MCF 10A (cell line): ENCODE measurements at regions of chr20 and their contacts with region 1.

Region 1: DNA sequence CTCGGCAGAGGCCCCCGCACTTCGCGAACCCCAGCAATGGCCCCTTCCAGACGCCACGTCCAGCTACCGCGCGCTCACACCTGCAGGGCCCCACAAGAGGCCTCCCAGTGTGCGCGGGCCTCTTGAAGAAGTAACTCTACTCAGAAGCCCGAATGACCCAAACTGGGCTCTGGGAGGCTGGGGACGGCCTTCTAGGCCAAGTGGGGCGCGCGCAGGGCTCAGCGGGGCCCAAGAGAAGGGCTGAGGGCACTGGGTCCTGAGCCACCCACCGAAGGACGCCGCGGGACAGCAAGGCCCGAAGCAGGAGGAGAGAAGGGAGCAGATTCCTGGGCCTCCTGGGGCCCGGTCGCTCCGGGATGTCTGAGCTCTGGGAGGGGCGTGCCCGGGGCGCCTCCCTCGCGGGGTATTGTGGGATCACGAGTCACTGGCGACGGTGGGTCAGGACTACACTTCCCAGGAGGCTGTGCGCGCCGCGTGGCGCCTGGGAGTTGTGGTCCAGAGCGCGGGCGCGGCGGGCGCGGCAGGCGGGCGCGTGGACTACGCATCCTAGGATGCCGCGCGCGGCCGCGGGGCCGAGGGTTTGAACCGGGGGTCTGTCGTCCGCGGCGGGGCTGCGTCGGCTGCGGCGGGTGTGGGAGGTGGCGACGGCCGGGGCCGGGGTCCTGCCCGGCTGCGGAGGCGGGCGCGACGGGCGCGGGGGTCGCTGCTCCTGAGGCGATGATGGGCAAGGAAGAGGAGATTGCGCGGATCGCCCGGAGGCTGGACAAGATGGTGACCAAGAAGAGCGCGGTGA is at the start of gene TCEA2:
- DNase-seq: peak; percentile 95
- H3K4me3 Mint-ChIP-seq: peak within 1 kb of the TSS; percentile 88
- H3K27ac Mint-ChIP-seq: peak within 1 kb of the TSS; percentile 89
- H3K4me1 Mint-ChIP-seq: peaks cover 41% of the 10 kb centered on the region
- H3K27me3 Mint-ChIP-seq: no peaks in the 10 kb centered on the region
- CTCF ChIP-seq: no peak
- total RNA-seq, gene TCEA2: 30.8 and 39.7 TPM in 2 replicates

Region 2: DNA sequence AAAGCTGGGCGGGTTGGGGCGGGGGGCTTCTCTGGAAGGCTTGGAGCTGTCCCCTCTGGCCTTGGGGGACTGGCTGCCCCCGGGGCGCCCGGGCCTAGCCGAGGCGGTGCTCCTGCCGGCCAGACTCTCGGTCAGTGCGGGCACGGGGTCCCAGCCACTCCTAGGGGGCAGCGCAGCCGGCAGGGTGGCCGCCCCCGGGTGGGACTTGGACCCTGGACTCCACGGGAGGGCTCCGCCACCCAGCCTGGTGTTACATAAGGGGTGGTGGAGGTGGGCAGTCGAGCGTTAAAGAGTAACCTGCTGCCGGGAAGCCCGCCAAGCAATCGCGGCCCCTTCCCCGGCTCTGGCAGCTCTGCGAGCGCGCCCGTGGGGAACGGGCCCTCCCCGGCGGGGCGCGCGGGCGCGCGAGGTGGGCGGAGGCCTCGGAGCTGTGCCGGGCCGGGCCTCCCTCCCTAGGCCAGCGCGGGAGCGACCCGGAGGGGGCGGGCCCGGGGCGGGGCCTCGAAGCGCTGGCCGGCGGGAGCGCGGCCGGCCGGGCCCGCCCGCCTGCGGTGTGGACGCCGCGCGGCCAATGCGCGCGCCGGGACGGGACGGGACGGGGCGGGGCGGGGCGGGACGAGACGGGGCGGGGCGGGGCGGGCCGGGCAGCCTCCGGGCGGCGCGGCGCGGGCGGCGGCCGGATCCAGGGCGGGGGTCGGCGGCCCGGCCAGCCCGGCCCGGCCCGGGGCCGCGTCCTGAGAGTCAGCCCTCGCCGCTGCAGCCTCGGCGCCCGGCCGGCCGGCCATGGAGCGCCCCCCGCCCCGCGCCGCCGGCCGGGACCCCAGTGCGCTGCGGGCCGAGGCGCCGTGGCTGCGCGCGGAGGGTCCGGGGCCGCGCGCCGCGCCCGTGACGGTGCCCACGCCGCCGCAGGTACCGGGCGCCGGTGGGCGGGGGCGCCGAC is 323.4 kb before region 1 on chr20 and contains the start of gene SLC2A4RG:
- CTCF ChIA-PET with region 1: no interaction called
- POLR2A ChIA-PET with region 1: no interaction called
- intact Hi-C with region 1: no loop called
- DNase-seq: peak; percentile 76
- H3K4me3 Mint-ChIP-seq: peak within 1 kb of the TSS; percentile 74
- H3K27ac Mint-ChIP-seq: no peak within 1 kb of the TSS
- H3K4me1 Mint-ChIP-seq: no peaks in the 10 kb centered on the region
- H3K27me3 Mint-ChIP-seq: no peaks in the 10 kb centered on the region
- CTCF ChIP-seq: no peak
- total RNA-seq, gene SLC2A4RG: 85.0 and 105 TPM in 2 replicates

Region 3: GRCh38 chr20:63955827-63956663 is 106.7 kb before region 1 on chr20 and contains the start of gene UCKL1:
- CTCF ChIA-PET with region 1: no interaction called
- POLR2A ChIA-PET with region 1: interaction called, 10 read pairs
- intact Hi-C with region 1: no loop called
- DNase-seq: peak; percentile 81
- H3K4me3 Mint-ChIP-seq: peak within 1 kb of the TSS; percentile 74
- H3K27ac Mint-ChIP-seq: no peak within 1 kb of the TSS
- H3K4me1 Mint-ChIP-seq: peaks cover 21% of the 10 kb centered on the region
- H3K27me3 Mint-ChIP-seq: no peaks in the 10 kb centered on the region
- CTCF ChIP-seq: no peak
- total RNA-seq, gene UCKL1: 38.6 and 43.7 TPM in 2 replicates

Region 4: DNA sequence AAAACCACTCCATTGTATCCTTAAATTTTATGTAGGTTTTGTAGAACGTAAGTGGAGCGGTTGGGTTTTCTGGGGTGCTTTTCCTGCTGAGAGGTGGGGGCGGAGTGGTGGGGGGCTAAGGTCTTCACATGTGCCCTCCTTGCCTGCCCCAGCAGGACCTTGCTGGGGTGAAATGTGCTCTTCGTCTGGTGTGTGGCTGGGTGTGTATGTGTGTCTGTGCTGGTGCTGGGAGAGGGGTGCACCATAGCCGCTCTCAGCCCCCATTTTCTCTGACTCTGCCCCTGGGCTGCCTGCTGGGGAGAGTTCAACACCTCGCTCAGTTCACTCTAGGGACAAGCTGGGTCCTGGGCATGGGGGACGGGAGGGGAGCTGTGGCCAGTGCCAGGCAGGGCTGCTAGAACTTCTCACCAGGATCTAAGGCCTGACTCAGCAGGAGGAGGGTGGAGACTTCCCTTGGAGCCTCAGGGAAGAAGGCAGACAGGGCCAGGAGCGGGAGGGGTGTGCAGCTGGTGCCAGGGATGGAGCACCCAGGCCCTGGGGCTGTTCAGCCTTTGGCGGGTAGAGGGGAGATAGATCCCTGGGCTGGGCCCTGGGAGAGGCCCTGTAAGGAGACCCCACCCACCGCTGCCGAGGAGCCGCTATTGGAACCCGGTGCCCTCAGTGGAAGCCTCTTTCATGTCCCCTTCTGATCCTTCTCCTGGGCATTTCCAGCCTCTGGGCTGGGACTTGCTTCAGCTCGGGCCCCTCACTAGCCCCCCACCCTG is 18.1 kb before region 1 on chr20:
- CTCF ChIA-PET with region 1: interaction called, 284 read pairs
- POLR2A ChIA-PET with region 1: interaction called, 21 read pairs
- intact Hi-C with region 1: loop called (anchors 1 kb)
- DNase-seq: peak; percentile 76
- H3K4me3 Mint-ChIP-seq: peak overlapping the region; percentile 13
- H3K27ac Mint-ChIP-seq: no peak overlapping the region
- H3K4me1 Mint-ChIP-seq: peaks cover 27% of the 10 kb centered on the region
- H3K27me3 Mint-ChIP-seq: no peaks in the 10 kb centered on the region
- CTCF ChIP-seq: no peak

Region 5: GRCh38 chr20:64079273-64080012 is 16.7 kb after region 1 on chr20 and contains the start of gene RGS19:
- CTCF ChIA-PET with region 1: interaction called, 6 read pairs
- POLR2A ChIA-PET with region 1: interaction called, 10 read pairs
- intact Hi-C with region 1: no loop called
- DNase-seq: peak; percentile 47
- H3K4me3 Mint-ChIP-seq: peak within 1 kb of the TSS; percentile 73
- H3K27ac Mint-ChIP-seq: peak within 1 kb of the TSS; percentile 83
- H3K4me1 Mint-ChIP-seq: peaks cover 8% of the 10 kb centered on the region
- H3K27me3 Mint-ChIP-seq: no peaks in the 10 kb centered on the region
- CTCF ChIP-seq: no peak
- total RNA-seq, gene RGS19: 8.2 and 8.8 TPM in 2 replicates

Region 6: GRCh38 chr20:64222291-64222735 is 159.5 kb after region 1 on chr20:
- CTCF ChIA-PET with region 1: no interaction called
- POLR2A ChIA-PET with region 1: no interaction called
- intact Hi-C with region 1: no loop called
- DNase-seq: peak; percentile 13
- H3K4me3 Mint-ChIP-seq: no peak overlapping the region
- H3K27ac Mint-ChIP-seq: no peak overlapping the region
- H3K4me1 Mint-ChIP-seq: peaks cover 6% of the 10 kb centered on the region
- H3K27me3 Mint-ChIP-seq: peaks cover 20% of the 10 kb centered on the region
- CTCF ChIP-seq: no peak

Region 7: DNA sequence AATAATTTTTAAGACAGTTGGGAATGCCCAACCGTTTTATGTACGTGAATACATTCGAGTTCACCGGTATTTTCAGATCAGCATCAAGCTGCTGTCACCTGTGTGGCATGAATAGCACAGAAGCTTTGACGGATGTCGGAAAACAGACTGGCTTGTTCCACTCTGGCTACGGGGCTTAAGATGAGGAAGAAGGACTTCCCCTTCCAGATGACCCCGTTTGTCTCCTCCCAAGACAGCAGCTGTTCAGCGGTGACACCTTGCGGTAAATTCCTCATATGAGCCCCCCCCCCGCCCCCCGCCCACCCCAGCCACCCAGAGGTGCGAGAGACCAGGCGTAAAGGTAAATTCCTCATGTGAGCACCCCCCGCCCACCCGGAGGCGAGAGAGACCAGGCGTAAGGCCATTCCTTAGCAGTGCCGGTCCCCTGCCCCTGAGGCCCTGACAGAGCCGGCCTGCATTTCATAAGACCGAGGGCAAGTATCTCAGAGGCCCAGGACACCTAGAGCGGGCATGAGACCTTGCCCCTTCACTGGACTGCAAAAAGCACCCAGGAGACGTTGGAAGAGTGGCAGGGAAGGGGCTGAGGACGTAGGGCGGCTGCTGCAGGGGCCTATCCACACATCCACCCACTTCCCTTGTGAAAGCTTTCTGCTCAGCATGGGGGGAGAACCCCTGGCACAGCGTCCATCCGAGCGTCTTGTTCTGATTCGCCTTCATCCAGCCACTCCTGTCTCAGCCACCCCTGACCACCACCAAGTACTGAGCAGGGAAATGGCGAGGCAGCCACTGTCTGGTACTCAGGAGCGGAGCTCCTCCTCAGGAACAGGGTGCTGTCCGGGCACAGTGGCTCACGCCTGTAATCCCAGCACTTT is 185.4 kb after region 1 on chr20:
- CTCF ChIA-PET with region 1: no interaction called
- POLR2A ChIA-PET with region 1: no interaction called
- intact Hi-C with region 1: no loop called
- DNase-seq: no peak
- H3K4me3 Mint-ChIP-seq: no peak overlapping the region
- H3K27ac Mint-ChIP-seq: no peak overlapping the region
- H3K4me1 Mint-ChIP-seq: no peaks in the 10 kb centered on the region
- H3K27me3 Mint-ChIP-seq: peaks cover 74% of the 10 kb centered on the region
- CTCF ChIP-seq: no peak